ENCODE measurements at regions of chr2 and their contacts with region 1.

Region 1: GRCh38 chr2:241074901-241075540 is 27.1 kb downstream of the MTERF4 start:
- DNase-seq: no peak
- ATAC-seq: no peak
- H3K4me3 ChIP-seq: no peak overlapping the region
- H3K4me3 Mint-ChIP-seq: no peak overlapping the region
- H3K27ac ChIP-seq: no peak overlapping the region
- H3K27ac Mint-ChIP-seq: peak overlapping the region in 1 of 9 donors; percentile 34
- H3K4me1 ChIP-seq: no peaks in the 10 kb centered on the region
- H3K4me1 Mint-ChIP-seq: peaks cover 0 to 21% (median 14%) of the 10 kb centered on the region in 7 donors
- H3K27me3 ChIP-seq: no peaks in the 10 kb centered on the region
- H3K27me3 Mint-ChIP-seq: no peaks in the 10 kb centered on the region

Region 2: GRCh38 chr2:240983361-240983995 is 91.5 kb before region 1 on chr2:
- CTCF ChIA-PET with region 1: no interaction called
- POLR2A ChIA-PET with region 1: interaction called, 5 read pairs
- intact Hi-C with region 1: loop called in 1 of 2 experiments (anchors 5 kb)
- DNase-seq: peak in 7 of 9 donors; percentile 27 to 55 (median 42)
- ATAC-seq: peak; percentile 78
- H3K4me3 ChIP-seq: no peak overlapping the region
- H3K4me3 Mint-ChIP-seq: peak overlapping the region in 1 of 10 donors; percentile 30
- H3K27ac ChIP-seq: no peak overlapping the region
- H3K27ac Mint-ChIP-seq: no peak overlapping the region
- H3K4me1 ChIP-seq: no peaks in the 10 kb centered on the region
- H3K4me1 Mint-ChIP-seq: peaks cover 0 to 5% (median 2%) of the 10 kb centered on the region in 7 donors
- H3K27me3 ChIP-seq: no peaks in the 10 kb centered on the region
- H3K27me3 Mint-ChIP-seq: peaks cover 0 to 14% (median 0%) of the 10 kb centered on the region in 5 donors

Region 3: GRCh38 chr2:241217320-241218031 is 142.5 kb after region 1 on chr2:
- CTCF ChIA-PET with region 1: interaction called, 3 read pairs
- POLR2A ChIA-PET with region 1: no interaction called
- intact Hi-C with region 1: loop called (anchors 5 kb)
- DNase-seq: peak in 7 of 9 donors; percentile 10 to 50 (median 36)
- ATAC-seq: peak; percentile 53
- H3K4me3 ChIP-seq: peak overlapping the region; percentile 44
- H3K4me3 Mint-ChIP-seq: peak overlapping the region; percentile 62 to 89 (median 79)
- H3K27ac ChIP-seq: peak overlapping the region; percentile 17
- H3K27ac Mint-ChIP-seq: peak overlapping the region in 6 of 9 donors; percentile 21 to 66 (median 33)
- H3K4me1 ChIP-seq: peaks cover 0 to 6% of the 10 kb centered on the region in 2 donors
- H3K4me1 Mint-ChIP-seq: peaks cover 9 to 15% (median 11%) of the 10 kb centered on the region in 7 donors
- H3K27me3 ChIP-seq: no peaks in the 10 kb centered on the region
- H3K27me3 Mint-ChIP-seq: peaks cover 0 to 21% (median 0%) of the 10 kb centered on the region in 5 donors

Region 4: GRCh38 chr2:241255542-241256167 is 180.6 kb after region 1 on chr2:
- CTCF ChIA-PET with region 1: no interaction called
- POLR2A ChIA-PET with region 1: no interaction called
- intact Hi-C with region 1: no loop called
- DNase-seq: no peak
- ATAC-seq: no peak
- H3K4me3 ChIP-seq: no peak overlapping the region
- H3K4me3 Mint-ChIP-seq: no peak overlapping the region
- H3K27ac ChIP-seq: no peak overlapping the region
- H3K27ac Mint-ChIP-seq: no peak overlapping the region
- H3K4me1 ChIP-seq: no peaks in the 10 kb centered on the region
- H3K4me1 Mint-ChIP-seq: peaks cover 0 to 7% (median 0%) of the 10 kb centered on the region in 7 donors
- H3K27me3 ChIP-seq: no peaks in the 10 kb centered on the region
- H3K27me3 Mint-ChIP-seq: no peaks in the 10 kb centered on the region

Measured in naive thymus-derived CD4-positive, alpha-beta T cell (primary cell).